CD8-positive, alpha-beta T cell (primary cell): ENCODE measurements at regions of chr1 and their contacts with region 1.

Region 1: GRCh38 chr1:6343506-6344405 is 49.8 kb downstream of the ACOT7 start:
- DNase-seq: peak; percentile 22 to 73 (median 61)
- ATAC-seq: peak; percentile 63
- H3K4me3 ChIP-seq: no peak overlapping the region
- H3K4me3 Mint-ChIP-seq: no peak overlapping the region
- H3K27ac ChIP-seq: no peak overlapping the region
- H3K27ac Mint-ChIP-seq: no peak overlapping the region
- H3K4me1 ChIP-seq: peaks cover 13% of the 10 kb centered on the region
- H3K4me1 Mint-ChIP-seq: peaks cover 10% of the 10 kb centered on the region
- H3K27me3 ChIP-seq: no peaks in the 10 kb centered on the region
- H3K27me3 Mint-ChIP-seq: no peaks in the 10 kb centered on the region
- CTCF ChIP-seq: peak; percentile 52

Region 2: DNA sequence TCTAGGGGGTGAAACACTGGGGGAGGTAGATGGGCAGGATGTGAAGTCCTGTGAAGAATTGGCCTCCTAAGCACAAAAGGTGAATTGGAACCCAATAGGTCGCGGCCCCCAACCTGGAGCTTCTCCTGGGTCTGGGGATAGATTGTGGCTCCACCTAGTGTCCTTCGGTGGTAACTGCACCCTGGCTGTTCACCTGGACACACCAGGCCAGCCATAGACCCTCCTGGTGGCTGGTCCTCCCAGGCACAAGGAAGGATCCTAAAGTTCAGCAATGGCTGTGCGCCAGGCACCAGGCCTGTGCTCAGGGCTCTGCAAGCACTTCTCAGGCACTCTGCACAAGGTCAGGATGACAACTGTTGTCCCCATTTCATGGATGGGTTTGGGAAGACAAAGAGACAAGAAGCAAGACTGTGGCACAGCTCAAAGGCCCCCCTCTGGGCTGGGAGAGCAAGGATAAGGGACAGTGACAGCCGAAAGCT is 94.3 kb after region 1 on chr1:
- CTCF ChIA-PET with region 1: interaction called, 9 read pairs
- POLR2A ChIA-PET with region 1: no interaction called
- intact Hi-C with region 1: loop called (anchors 1 kb)
- DNase-seq: peak; percentile 54 to 82 (median 72)
- ATAC-seq: peak; percentile 75
- H3K4me3 ChIP-seq: no peak overlapping the region
- H3K4me3 Mint-ChIP-seq: no peak overlapping the region
- H3K27ac ChIP-seq: no peak overlapping the region
- H3K27ac Mint-ChIP-seq: no peak overlapping the region
- H3K4me1 ChIP-seq: peaks cover 6% of the 10 kb centered on the region
- H3K4me1 Mint-ChIP-seq: peaks cover 12% of the 10 kb centered on the region
- H3K27me3 ChIP-seq: peaks cover 0 to 8% of the 10 kb centered on the region in 2 experiments
- H3K27me3 Mint-ChIP-seq: peaks cover 26% of the 10 kb centered on the region
- CTCF ChIP-seq: peak; percentile 92